Posterior vena cava (tissue), 2 donors: ENCODE measurements at regions of chr13 and their contacts with region 1.

Region 1: DNA sequence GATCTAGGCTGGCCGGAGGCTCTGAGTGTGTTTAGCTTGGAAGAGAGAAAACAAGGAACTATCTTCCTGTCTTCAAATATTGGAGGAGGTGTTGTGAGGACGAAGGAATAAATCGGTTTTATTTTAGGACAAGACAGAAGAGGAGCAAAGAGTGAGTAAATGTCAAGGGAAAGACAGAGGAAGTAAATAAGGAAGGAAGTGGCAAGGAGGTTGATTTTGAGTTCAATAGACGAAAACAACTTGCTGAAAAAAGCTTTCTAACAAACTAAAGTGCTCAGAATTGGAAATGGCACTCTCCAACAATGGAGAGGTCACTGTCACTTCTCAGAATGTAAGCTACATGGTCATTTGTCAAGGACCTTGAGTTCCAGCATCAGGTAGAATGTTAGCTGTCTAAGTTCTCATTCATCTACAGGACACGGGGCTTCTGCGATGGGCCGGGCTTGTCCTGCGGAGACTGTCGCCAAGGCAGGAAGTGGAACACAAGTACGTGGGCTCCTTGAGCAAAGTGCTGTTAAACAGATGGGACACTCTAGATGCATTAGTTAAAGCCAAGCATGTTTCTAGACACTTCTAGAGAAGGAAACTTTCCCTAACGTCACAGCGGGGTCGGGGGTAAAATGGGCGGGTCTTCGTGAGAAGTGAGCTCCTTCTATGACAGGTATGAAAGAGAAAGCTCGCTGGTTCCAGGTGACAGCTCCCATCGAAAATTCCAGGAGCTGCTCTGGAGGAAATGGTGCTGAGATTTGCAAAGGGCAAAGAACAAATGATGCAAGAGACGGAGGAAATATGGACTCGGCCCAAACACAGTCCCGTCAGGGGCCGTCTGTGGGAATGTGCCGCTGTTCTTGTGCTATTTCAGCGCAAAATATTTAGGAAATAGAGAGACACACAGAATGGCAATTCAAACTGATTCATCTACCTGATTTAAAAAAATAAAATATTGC is 103.9 kb upstream of the UBL3 start:
- DNase-seq: no peak

Region 2: DNA sequence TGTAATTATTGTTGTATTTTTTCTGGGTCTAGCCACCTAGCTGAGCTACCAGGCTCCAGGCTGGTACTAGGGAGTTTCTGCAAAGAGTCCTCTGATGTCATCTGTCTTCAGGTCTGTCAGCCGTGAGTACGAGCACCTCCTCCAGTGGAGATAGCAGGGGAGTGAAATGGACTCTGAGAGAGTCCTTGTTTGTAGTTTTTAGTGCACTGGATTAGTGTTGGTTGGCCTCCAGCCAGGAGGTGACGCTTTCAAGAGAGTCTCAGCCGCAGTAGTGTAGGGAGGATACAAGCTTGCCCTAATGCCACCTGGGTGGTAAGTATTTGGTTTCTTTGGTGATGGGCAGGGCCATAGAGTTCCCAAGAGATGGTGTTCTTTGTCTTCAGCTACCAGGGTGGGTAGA is 743.7 kb before region 1 on chr13:
- intact Hi-C with region 1: loop called in 1 of 2 experiments (anchors 5 kb)
- DNase-seq: no peak